HepG2 (cell line): ENCODE measurements at regions of chr11 and their contacts with region 1.

Region 1: GRCh38 chr11:65314501-65315203 is at the start of gene CDC42EP2:
- DNase-seq: peak; percentile 74
- ATAC-seq: peak; percentile 89
- H3K4me3 ChIP-seq: peak within 1 kb of the TSS; percentile 88 to 100 (median 95)
- H3K27ac ChIP-seq: peak within 1 kb of the TSS; percentile 77
- H3K4me1 ChIP-seq: peaks cover 64% of the 10 kb centered on the region
- H3K27me3 ChIP-seq: no peaks in the 10 kb centered on the region
- CTCF ChIP-seq: no peak
- EP300 ChIP-seq: no peak
- POLR2A ChIP-seq: peak; percentile 58 to 95
- RAD21 ChIP-seq: no peak; the same call in 1 of the 2 replicates
- total RNA-seq, gene CDC42EP2: 2.5 and 7.1 TPM in 2 replicates

Region 2: GRCh38 chr11:65225279-65226102 is 89.2 kb before region 1 on chr11:
- CTCF ChIA-PET with region 1: interaction called, 7 read pairs
- POLR2A ChIA-PET with region 1: interaction called, 10 read pairs
- in situ Hi-C with region 1: no loop called
- intact Hi-C with region 1: no loop called
- DNase-seq: peak; percentile 47
- ATAC-seq: peak; percentile 92
- H3K4me3 ChIP-seq: peak overlapping the region; percentile 66 to 79 (median 66)
- H3K27ac ChIP-seq: no peak overlapping the region
- H3K4me1 ChIP-seq: peaks cover 19% of the 10 kb centered on the region
- H3K27me3 ChIP-seq: peaks cover 0 to 8% of the 10 kb centered on the region in 2 experiments; a peak in 1 of 5 replicates
- CTCF ChIP-seq: peak; percentile 87
- EP300 ChIP-seq: no peak
- POLR2A ChIP-seq: no peak
- RAD21 ChIP-seq: peak; percentile 85

Region 3: GRCh38 chr11:65290448-65291165 is 24.0 kb before region 1 on chr11:
- CTCF ChIA-PET with region 1: interaction called, 7 read pairs
- POLR2A ChIA-PET with region 1: interaction called, 36 read pairs
- in situ Hi-C with region 1: no loop called
- intact Hi-C with region 1: no loop called
- DNase-seq: no peak
- ATAC-seq: no peak
- H3K4me3 ChIP-seq: no peak overlapping the region
- H3K27ac ChIP-seq: peak overlapping the region; percentile 6
- H3K4me1 ChIP-seq: peaks cover 32% of the 10 kb centered on the region
- H3K27me3 ChIP-seq: no peaks in the 10 kb centered on the region
- CTCF ChIP-seq: no peak
- EP300 ChIP-seq: no peak
- POLR2A ChIP-seq: no peak
- RAD21 ChIP-seq: no peak

Region 4: GRCh38 chr11:65301491-65302329 is 12.9 kb before region 1 on chr11:
- CTCF ChIA-PET with region 1: interaction called, 5 read pairs
- POLR2A ChIA-PET with region 1: interaction called, 61 read pairs
- in situ Hi-C with region 1: no loop called
- intact Hi-C with region 1: loop called (anchors 1 kb)
- DNase-seq: no peak
- ATAC-seq: peak; percentile 72
- H3K4me3 ChIP-seq: peak overlapping the region in 1 of 3 experiments; percentile 33; a peak in 1 of 6 replicates
- H3K27ac ChIP-seq: no peak overlapping the region
- H3K4me1 ChIP-seq: peaks cover 46% of the 10 kb centered on the region
- H3K27me3 ChIP-seq: no peaks in the 10 kb centered on the region
- CTCF ChIP-seq: peak; percentile 10; the same call in 1 of the 2 replicates
- EP300 ChIP-seq: no peak
- POLR2A ChIP-seq: no peak
- RAD21 ChIP-seq: no peak